ENCODE measurements at regions of chr7 and their contacts with region 1.

Region 1: DNA sequence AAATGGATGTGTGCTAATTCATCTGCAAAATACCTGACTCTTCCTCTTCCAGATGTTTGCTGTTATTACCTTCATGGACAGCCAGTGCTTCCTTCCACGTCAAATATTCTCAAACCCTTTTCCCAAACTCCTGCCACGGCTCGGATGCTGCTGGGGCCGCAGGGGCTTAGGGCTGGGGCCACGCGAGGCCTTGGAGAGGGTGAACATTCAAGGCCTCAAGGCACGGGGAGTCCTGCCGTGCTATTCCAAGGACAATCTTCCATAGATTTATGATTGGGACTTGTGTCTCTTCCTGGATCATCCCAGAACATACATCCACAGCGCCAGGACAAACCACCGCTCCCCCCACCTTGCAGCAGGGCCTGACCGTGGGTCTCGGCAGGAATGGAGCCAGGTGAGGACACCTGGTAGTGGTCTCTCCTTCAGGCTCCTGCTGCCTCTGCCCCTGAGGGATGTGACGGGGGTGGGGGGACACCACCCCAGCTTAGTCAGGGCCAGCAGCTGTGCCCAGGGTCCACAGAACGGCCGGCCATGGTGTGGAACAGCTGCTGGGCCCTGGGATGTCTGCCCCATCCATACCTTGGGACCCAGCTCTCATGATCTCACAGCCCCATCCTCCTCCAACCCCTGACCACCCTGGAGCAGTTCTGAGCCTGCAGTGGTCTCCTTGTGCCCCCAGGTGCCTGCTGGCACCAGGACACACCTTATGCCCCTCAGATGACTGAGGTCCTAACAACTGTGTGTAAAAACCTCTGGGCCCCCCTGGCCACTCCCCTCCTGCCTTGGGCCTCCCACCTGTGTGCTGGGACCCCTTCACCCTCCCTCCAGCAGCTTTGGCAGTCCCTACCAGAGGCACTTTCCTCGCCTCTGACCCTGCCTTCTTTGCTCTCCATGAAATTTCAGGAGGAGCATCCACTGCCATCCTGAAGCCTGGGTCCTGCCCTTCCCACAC is 16.7 kb downstream of the VIPR2 start:
- DNase-seq: no peak
- H3K4me3 ChIP-seq: no peak overlapping the region
- H3K4me3 Mint-ChIP-seq: no peak overlapping the region
- H3K27ac ChIP-seq: no peak overlapping the region
- H3K27ac Mint-ChIP-seq: no peak overlapping the region
- H3K4me1 ChIP-seq: no peaks in the 10 kb centered on the region
- H3K4me1 Mint-ChIP-seq: no peaks in the 10 kb centered on the region
- H3K27me3 ChIP-seq: no peaks in the 10 kb centered on the region
- H3K27me3 Mint-ChIP-seq: peaks cover 1 to 10% (median 2%) of the 10 kb centered on the region in 3 donors
- CTCF ChIP-seq: no peak

Region 2: GRCh38 chr7:158924956-158925355 is 203.0 kb before region 1 on chr7:
- intact Hi-C with region 1: no loop called
- DNase-seq: no peak
- H3K4me3 ChIP-seq: no peak overlapping the region
- H3K4me3 Mint-ChIP-seq: no peak overlapping the region
- H3K27ac ChIP-seq: no peak overlapping the region
- H3K27ac Mint-ChIP-seq: no peak overlapping the region
- H3K4me1 ChIP-seq: no peaks in the 10 kb centered on the region
- H3K4me1 Mint-ChIP-seq: no peaks in the 10 kb centered on the region
- H3K27me3 ChIP-seq: no peaks in the 10 kb centered on the region
- H3K27me3 Mint-ChIP-seq: peaks cover 0 to 2% (median 0%) of the 10 kb centered on the region in 3 donors
- CTCF ChIP-seq: no peak

Region 3: GRCh38 chr7:159165352-159165751 is 37.4 kb after region 1 on chr7:
- intact Hi-C with region 1: loop called in 1 of 2 experiments (anchors 2 kb)
- DNase-seq: no peak
- H3K4me3 ChIP-seq: no peak overlapping the region
- H3K4me3 Mint-ChIP-seq: no peak overlapping the region
- H3K27ac ChIP-seq: no peak overlapping the region
- H3K27ac Mint-ChIP-seq: no peak overlapping the region
- H3K4me1 ChIP-seq: no peaks in the 10 kb centered on the region
- H3K4me1 Mint-ChIP-seq: no peaks in the 10 kb centered on the region
- H3K27me3 ChIP-seq: no peaks in the 10 kb centered on the region
- H3K27me3 Mint-ChIP-seq: peaks cover 0 to 1% (median 0%) of the 10 kb centered on the region in 3 donors
- CTCF ChIP-seq: no peak

Measured in CD14-positive monocyte (primary cell).